PC-9 (cell line): ENCODE measurements at regions of chr1 and their contacts with region 1.

Region 1: GRCh38 chr1:9990944-9991343 is 6.1 kb upstream of the RBP7 start:
- DNase-seq: no peak
- H3K4me3 ChIP-seq: no peak overlapping the region
- H3K27ac ChIP-seq: no peak overlapping the region
- H3K4me1 ChIP-seq: no peaks in the 10 kb centered on the region
- H3K27me3 ChIP-seq: no peaks in the 10 kb centered on the region
- CTCF ChIP-seq: no peak

Region 2: GRCh38 chr1:9942939-9943788 is 47.8 kb before region 1 on chr1 and contains the starts of genes LZIC and NMNAT1:
- CTCF ChIA-PET with region 1: no interaction called
- POLR2A ChIA-PET with region 1: no interaction called
- intact Hi-C with region 1: no loop called
- DNase-seq: peak; percentile 78 to 91
- H3K4me3 ChIP-seq: peak within 1 kb of the TSS; percentile 86
- H3K27ac ChIP-seq: peak within 1 kb of the TSS; percentile 88
- H3K4me1 ChIP-seq: peaks cover 6% of the 10 kb centered on the region
- H3K27me3 ChIP-seq: no peaks in the 10 kb centered on the region
- CTCF ChIP-seq: no peak
- total RNA-seq, gene LZIC: 27.4 and 33.5 TPM in 2 replicates
- total RNA-seq, gene NMNAT1: 10.1 and 13.4 TPM in 2 replicates

Region 3: GRCh38 chr1:10196976-10197375 is 206.0 kb after region 1 on chr1:
- CTCF ChIA-PET with region 1: no interaction called
- POLR2A ChIA-PET with region 1: interaction called, 10 read pairs
- intact Hi-C with region 1: no loop called
- DNase-seq: no peak
- H3K4me3 ChIP-seq: no peak overlapping the region
- H3K27ac ChIP-seq: no peak overlapping the region
- H3K4me1 ChIP-seq: peaks cover 3% of the 10 kb centered on the region; the same call in 1 of the 2 replicates
- H3K27me3 ChIP-seq: no peaks in the 10 kb centered on the region
- CTCF ChIP-seq: no peak

Region 4: DNA sequence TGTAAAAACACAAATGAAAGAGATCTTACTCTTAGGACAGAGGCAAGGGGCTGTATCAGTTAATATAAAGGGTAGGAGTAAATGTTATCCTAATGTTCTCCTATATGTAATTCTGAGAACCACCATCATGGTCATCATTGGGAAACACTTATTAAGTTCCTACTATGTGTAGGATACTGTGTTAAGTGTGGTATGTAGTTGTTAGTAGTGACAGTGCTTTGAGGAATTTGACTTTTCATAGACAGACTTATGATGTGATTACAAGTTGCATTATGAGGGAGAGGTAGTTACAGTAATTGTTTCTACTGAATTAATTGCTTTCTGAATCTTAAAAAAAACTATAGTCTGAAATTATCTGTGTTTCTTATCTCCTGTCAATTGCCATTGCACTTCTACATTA is 356.2 kb after region 1 on chr1:
- CTCF ChIA-PET with region 1: no interaction called
- POLR2A ChIA-PET with region 1: no interaction called
- intact Hi-C with region 1: no loop called
- DNase-seq: no peak
- H3K4me3 ChIP-seq: no peak overlapping the region
- H3K27ac ChIP-seq: no peak overlapping the region
- H3K4me1 ChIP-seq: no peaks in the 10 kb centered on the region
- H3K27me3 ChIP-seq: no peaks in the 10 kb centered on the region
- CTCF ChIP-seq: no peak